Gastrocnemius medialis (tissue), 4 donors: ENCODE measurements at regions of chr4 and their contacts with region 1.

Region 1: GRCh38 chr4:85147439-85148076 is 181.1 kb upstream of the WDFY3 start:
- DNase-seq: peak; percentile 32 to 38
- ATAC-seq: peak; percentile 46 to 67
- H3K4me3 ChIP-seq: peak overlapping the region in 2 of 4 donors; percentile 2 to 36
- H3K27ac ChIP-seq: no peak overlapping the region
- H3K4me1 ChIP-seq: peaks cover 0 to 4% of the 10 kb centered on the region in 2 donors
- H3K27me3 ChIP-seq: no peaks in the 10 kb centered on the region
- CTCF ChIP-seq: peak; percentile 21 to 64 (median 61)
- POLR2A ChIP-seq: no peak

Region 2: GRCh38 chr4:85370430-85371032 is 223.0 kb after region 1 on chr4:
- in situ Hi-C with region 1: loop called in 1 of 4 experiments (anchors 10 kb)
- intact Hi-C with region 1: loop called (anchors 5 kb)
- DNase-seq: peak; percentile 3 to 12
- ATAC-seq: peak in 1 of 2 donors; percentile 30
- H3K4me3 ChIP-seq: no peak overlapping the region
- H3K27ac ChIP-seq: no peak overlapping the region
- H3K4me1 ChIP-seq: no peaks in the 10 kb centered on the region
- H3K27me3 ChIP-seq: no peaks in the 10 kb centered on the region
- CTCF ChIP-seq: peak in 3 of 5 experiments; percentile 34 to 54 (median 46)
- POLR2A ChIP-seq: no peak

Region 3: DNA sequence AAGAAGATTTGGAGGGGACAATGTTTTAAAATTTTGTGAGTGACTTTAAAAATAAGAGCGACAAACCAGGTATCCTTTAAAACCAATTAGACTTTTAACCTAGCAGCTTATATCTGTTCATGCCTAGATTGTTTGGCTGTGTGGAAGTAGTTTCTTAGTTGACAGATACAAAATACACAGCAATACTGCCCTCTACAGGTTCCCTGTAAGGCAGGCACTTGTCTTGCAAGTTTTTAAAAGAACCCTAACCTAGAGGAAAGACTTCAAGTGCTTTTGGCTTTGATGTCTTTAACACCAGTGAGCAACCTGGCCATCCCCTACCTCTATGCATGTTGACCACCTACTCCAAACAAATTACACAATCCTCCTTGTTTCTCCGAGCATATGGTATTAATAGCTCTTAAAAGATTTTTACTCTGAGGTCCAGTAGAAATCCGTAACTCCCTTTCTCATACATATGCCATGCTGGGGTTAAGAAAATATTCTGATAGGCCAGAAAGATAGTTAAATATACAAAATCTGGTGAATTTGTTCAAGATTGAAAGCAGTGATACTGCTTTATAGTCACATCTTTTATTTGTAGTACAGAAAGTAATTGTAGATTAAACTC is 600.4 kb after region 1 on chr4:
- in situ Hi-C with region 1: loop called (anchors 5 to 25 kb)
- intact Hi-C with region 1: loop called (anchors 1 kb)
- DNase-seq: no peak
- ATAC-seq: peak; percentile 60 to 79
- H3K4me3 ChIP-seq: no peak overlapping the region
- H3K27ac ChIP-seq: no peak overlapping the region
- H3K4me1 ChIP-seq: peaks cover 0 to 3% of the 10 kb centered on the region in 2 donors
- H3K27me3 ChIP-seq: no peaks in the 10 kb centered on the region
- CTCF ChIP-seq: peak; percentile 53 to 81 (median 69)
- POLR2A ChIP-seq: no peak

Region 4: GRCh38 chr4:85756938-85757337 is 609.4 kb after region 1 on chr4:
- in situ Hi-C with region 1: loop called in 1 of 4 experiments (anchors 25 kb)
- intact Hi-C with region 1: no loop called
- DNase-seq: no peak
- ATAC-seq: no peak
- H3K4me3 ChIP-seq: no peak overlapping the region
- H3K27ac ChIP-seq: no peak overlapping the region
- H3K4me1 ChIP-seq: peaks cover 1 to 4% of the 10 kb centered on the region in 2 donors
- H3K27me3 ChIP-seq: no peaks in the 10 kb centered on the region
- CTCF ChIP-seq: peak in 2 of 5 experiments; percentile 37 to 46
- POLR2A ChIP-seq: no peak

Region 5: GRCh38 chr4:85798012-85798770 is 650.6 kb after region 1 on chr4:
- in situ Hi-C with region 1: no loop called
- intact Hi-C with region 1: loop called (anchors 5 kb)
- DNase-seq: no peak
- ATAC-seq: no peak
- H3K4me3 ChIP-seq: no peak overlapping the region
- H3K27ac ChIP-seq: no peak overlapping the region
- H3K4me1 ChIP-seq: peaks cover 0 to 5% of the 10 kb centered on the region in 2 donors
- H3K27me3 ChIP-seq: no peaks in the 10 kb centered on the region
- CTCF ChIP-seq: no peak
- POLR2A ChIP-seq: no peak

Region 6: GRCh38 chr4:85968945-85969819 is 821.6 kb after region 1 on chr4:
- in situ Hi-C with region 1: loop called in 2 of 4 experiments (anchors 5 to 10 kb)
- intact Hi-C with region 1: loop called (anchors 5 kb)
- DNase-seq: no peak
- ATAC-seq: peak; percentile 64 to 72
- H3K4me3 ChIP-seq: no peak overlapping the region
- H3K27ac ChIP-seq: no peak overlapping the region
- H3K4me1 ChIP-seq: peaks cover 0 to 7% of the 10 kb centered on the region in 2 donors
- H3K27me3 ChIP-seq: no peaks in the 10 kb centered on the region
- CTCF ChIP-seq: peak in 4 of 5 experiments; percentile 43 to 62 (median 50)
- POLR2A ChIP-seq: no peak

Region 7: DNA sequence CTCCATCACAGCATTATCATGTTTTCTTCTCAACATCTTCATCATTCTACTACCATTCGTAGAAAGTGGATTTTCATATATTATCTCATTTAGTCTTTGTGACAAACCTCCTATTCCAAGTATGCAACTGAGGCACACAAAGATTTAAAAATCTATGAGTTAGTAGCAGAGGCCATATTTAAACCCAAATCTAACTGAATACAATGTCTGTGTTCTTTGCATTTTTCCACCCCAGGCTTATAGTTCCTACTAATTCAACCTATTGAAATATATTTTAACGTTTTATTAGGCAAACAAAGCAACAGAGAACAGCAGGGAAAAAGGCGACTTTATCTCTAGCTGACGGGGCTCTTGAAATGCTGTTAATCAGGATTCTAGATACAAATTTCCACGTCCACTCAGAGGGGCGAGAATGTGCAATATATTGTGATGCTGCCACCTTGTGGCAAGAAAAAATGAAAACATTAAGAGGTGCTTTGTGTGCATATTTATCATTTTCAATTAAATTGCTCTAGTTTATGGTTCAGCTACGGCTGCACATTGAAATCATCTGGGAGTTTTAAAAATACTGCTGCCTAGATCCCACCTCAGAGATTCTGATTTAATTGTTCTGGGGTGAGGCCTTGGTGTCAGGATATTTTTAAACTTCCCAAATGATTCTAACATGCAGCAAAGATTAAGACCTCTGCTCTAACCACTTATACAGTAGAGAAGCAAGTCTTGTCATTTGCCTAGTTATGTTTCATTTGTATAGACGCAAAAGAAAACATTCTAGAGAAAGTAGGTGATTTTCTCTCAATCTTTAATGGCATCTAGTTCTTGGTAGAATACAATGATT is 896.4 kb after region 1 on chr4:
- in situ Hi-C with region 1: no loop called
- intact Hi-C with region 1: loop called (anchors 5 kb)
- DNase-seq: no peak
- ATAC-seq: peak; percentile 46 to 56
- H3K4me3 ChIP-seq: no peak overlapping the region
- H3K27ac ChIP-seq: no peak overlapping the region
- H3K4me1 ChIP-seq: peaks cover 0 to 4% of the 10 kb centered on the region in 2 donors
- H3K27me3 ChIP-seq: no peaks in the 10 kb centered on the region
- CTCF ChIP-seq: peak; percentile 28 to 68 (median 56)
- POLR2A ChIP-seq: no peak